ENCODE measurements at regions of chr11 and their contacts with region 1.

Region 1: DNA sequence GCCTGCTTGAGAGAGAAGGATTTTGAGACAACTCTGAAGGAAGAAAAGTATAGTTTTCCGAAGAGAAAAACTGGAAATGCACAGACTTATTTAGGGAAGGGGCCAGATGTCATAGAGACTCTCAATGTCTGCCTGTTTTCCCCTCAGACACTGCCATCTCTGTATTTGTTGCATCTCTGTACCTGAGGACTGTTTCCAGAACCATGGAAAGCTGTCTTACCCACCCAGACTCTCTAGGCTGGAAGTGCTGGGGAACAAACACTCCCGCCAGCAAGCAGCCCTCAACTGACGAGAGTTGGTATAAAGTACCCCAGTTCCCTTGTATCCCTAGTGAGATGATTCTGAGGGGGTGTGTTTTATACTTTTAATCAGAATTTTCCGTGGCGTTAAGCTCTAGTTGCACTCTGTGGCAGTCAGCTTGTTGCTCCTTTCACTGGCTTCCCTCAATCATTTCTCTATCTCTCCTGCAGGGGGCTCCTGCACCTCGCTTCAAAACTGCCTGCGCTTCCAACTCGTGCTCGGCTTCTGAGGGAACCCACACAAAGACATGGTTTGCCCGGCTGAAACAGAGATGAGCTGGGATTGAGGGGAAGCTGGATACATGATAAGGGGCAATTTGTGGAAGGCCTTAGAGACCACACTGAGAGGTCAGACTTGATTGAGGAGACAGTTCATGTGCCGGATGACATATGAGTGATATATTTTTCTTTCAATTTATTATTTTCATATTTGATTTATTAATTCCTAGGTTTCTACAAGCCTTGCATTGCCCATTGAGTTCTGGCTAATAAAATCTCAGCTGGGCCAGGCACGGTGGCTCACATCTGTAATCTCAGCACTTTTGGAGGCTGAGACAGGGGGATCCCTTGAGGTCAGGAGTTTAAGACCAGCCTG is 36.9 kb upstream of the CLPB start:
- DNase-seq: peak; percentile 66
- H3K4me3 Mint-ChIP-seq: no peak overlapping the region
- H3K27ac Mint-ChIP-seq: no peak overlapping the region
- H3K4me1 Mint-ChIP-seq: peaks cover 4% of the 10 kb centered on the region
- H3K27me3 Mint-ChIP-seq: peaks cover 57% of the 10 kb centered on the region

Region 2: GRCh38 chr11:72446902-72447769 is 24.1 kb before region 1 on chr11:
- CTCF ChIA-PET with region 1: interaction called, 21 read pairs
- POLR2A ChIA-PET with region 1: no interaction called
- DNase-seq: no peak
- H3K4me3 Mint-ChIP-seq: no peak overlapping the region
- H3K27ac Mint-ChIP-seq: no peak overlapping the region
- H3K4me1 Mint-ChIP-seq: no peaks in the 10 kb centered on the region
- H3K27me3 Mint-ChIP-seq: peaks cover 24% of the 10 kb centered on the region

Region 3: DNA sequence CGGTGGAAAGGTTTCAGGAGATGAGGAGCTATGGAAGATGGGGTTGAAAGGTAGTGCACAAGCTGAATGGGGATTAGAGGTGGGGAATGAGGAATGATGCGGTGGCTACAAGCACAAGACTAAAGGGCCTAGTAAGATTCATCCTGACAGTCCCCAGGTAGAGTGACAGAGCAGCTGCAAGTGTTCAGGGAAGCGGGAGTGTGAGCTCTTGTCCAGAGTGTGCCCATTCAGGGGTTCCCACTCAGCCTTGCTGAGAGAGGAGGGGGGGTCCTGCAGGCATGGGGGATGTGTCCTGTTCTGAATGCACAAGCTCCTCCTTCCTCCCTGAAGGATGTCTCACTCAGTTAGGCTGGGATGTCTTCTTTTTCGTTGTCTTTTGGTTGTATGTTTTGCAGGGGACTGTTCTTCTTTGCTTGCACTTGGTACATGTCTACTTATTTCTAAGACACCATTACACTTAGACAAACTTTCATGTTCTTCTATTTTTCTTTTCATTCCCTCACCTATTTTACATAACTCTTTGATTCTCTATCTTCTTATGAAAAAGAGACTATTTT is 11.1 kb before region 1 on chr11:
- CTCF ChIA-PET with region 1: interaction called, 24 read pairs
- POLR2A ChIA-PET with region 1: no interaction called
- DNase-seq: no peak
- H3K4me3 Mint-ChIP-seq: no peak overlapping the region
- H3K27ac Mint-ChIP-seq: no peak overlapping the region
- H3K4me1 Mint-ChIP-seq: no peaks in the 10 kb centered on the region
- H3K27me3 Mint-ChIP-seq: peaks cover 42% of the 10 kb centered on the region

Region 4: GRCh38 chr11:72493426-72494108 is 22.3 kb after region 1 on chr11:
- CTCF ChIA-PET with region 1: interaction called, 10 read pairs
- POLR2A ChIA-PET with region 1: no interaction called
- DNase-seq: no peak
- H3K4me3 Mint-ChIP-seq: no peak overlapping the region
- H3K27ac Mint-ChIP-seq: no peak overlapping the region
- H3K4me1 Mint-ChIP-seq: peaks cover 8% of the 10 kb centered on the region
- H3K27me3 Mint-ChIP-seq: peaks cover 4% of the 10 kb centered on the region

Region 5: GRCh38 chr11:72546866-72547265 is 75.6 kb after region 1 on chr11:
- CTCF ChIA-PET with region 1: interaction called, 45 read pairs
- POLR2A ChIA-PET with region 1: no interaction called
- DNase-seq: no peak
- H3K4me3 Mint-ChIP-seq: no peak overlapping the region
- H3K27ac Mint-ChIP-seq: no peak overlapping the region
- H3K4me1 Mint-ChIP-seq: no peaks in the 10 kb centered on the region
- H3K27me3 Mint-ChIP-seq: peaks cover 16% of the 10 kb centered on the region

Region 6: DNA sequence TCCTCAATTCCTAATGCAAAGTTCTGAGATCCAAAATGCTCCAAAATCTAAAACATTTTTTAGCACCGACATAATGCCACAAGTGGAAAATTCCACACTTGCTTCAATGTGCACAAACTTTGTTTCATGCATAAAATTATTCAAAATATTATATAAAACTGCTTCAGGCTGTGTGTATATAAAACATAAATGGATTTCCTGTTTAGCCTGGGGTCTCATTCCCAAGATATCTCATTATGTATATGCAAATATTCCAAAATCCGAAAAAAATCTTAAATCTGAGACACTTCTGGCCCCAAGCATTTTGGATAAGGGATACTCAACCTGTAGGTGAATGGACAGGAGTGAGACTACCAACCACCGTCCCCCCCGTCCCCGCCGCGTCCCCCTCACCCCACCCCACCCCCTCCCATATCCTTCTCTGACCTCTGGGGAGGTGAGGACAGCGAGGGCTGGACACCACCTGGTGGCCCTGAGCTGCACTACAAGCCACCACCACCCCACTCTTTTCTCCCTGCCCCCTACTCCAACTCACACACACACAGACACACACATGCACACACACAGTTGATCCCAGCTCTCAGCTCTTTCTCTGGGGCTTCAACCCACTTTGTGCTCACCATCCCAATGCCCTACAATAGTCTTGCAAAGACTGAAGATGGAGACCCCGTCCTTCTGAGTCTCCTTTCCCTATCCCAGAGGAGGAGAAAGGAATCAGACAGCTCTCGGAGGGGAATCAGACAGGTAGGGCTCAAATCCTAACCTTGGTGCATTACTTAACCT is 102.0 kb after region 1 on chr11:
- CTCF ChIA-PET with region 1: interaction called, 54 read pairs
- POLR2A ChIA-PET with region 1: no interaction called
- DNase-seq: peak; percentile 54
- H3K4me3 Mint-ChIP-seq: no peak overlapping the region
- H3K27ac Mint-ChIP-seq: no peak overlapping the region
- H3K4me1 Mint-ChIP-seq: peaks cover 43% of the 10 kb centered on the region
- H3K27me3 Mint-ChIP-seq: peaks cover 11% of the 10 kb centered on the region

Region 7: DNA sequence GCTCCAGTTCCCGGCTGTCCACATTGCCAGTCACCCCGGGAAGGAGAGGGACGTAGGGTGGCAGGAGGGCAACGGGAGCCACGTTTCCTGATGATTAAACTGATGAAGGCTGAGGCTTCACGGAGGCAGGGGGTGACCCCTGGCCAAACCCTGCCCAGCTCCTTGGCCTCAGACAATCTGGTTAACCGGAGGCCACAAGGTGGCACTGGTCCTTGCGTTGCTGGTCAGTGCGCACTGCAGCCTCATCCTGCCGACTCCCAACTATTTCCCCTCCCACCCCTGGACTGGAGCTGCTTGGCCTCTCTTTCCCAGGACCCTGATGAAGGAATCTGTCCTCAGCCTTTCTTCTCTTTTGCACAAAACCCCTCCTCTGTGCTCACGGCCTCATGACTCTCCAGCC is 127.7 kb after region 1 on chr11:
- CTCF ChIA-PET with region 1: no interaction called
- POLR2A ChIA-PET with region 1: no interaction called
- DNase-seq: no peak
- H3K4me3 Mint-ChIP-seq: no peak overlapping the region
- H3K27ac Mint-ChIP-seq: no peak overlapping the region
- H3K4me1 Mint-ChIP-seq: no peaks in the 10 kb centered on the region
- H3K27me3 Mint-ChIP-seq: peaks cover 29% of the 10 kb centered on the region

Region 8: GRCh38 chr11:72668611-72669347 is 197.5 kb after region 1 on chr11:
- CTCF ChIA-PET with region 1: interaction called, 10 read pairs
- POLR2A ChIA-PET with region 1: no interaction called
- DNase-seq: peak; percentile 72
- H3K4me3 Mint-ChIP-seq: no peak overlapping the region
- H3K27ac Mint-ChIP-seq: no peak overlapping the region
- H3K4me1 Mint-ChIP-seq: peaks cover 12% of the 10 kb centered on the region
- H3K27me3 Mint-ChIP-seq: peaks cover 34% of the 10 kb centered on the region

Measured in activated CD4-positive, alpha-beta memory T cell treated with anti-CD3 and anti-CD28 coated beads, Interleukin-2, amount 10 ng/mL, durations not matched to agents 7 days and 5 days (primary cell).